GM12878 (cell line): ENCODE measurements at regions of chr5 and their contacts with region 1.

Region 1: GRCh38 chr5:36241631-36242533 is at the start of gene NADK2:
- DNase-seq: peak; percentile 61
- ATAC-seq: peak; percentile 92
- H3K4me3 ChIP-seq: peak within 1 kb of the TSS; percentile 97
- H3K27ac ChIP-seq: peak within 1 kb of the TSS; percentile 59
- H3K4me1 ChIP-seq: peaks cover 19% of the 10 kb centered on the region
- H3K27me3 ChIP-seq: no peaks in the 10 kb centered on the region
- CTCF ChIP-seq: peak; percentile 69 to 74 (median 73)
- EP300 ChIP-seq: no peak
- POLR2A ChIP-seq: peak; percentile 71
- RAD21 ChIP-seq: peak; percentile 40; the same call in 1 of the 2 replicates
- polyA plus RNA-seq, gene NADK2: 2.4 to 3.1 TPM

Region 2: DNA sequence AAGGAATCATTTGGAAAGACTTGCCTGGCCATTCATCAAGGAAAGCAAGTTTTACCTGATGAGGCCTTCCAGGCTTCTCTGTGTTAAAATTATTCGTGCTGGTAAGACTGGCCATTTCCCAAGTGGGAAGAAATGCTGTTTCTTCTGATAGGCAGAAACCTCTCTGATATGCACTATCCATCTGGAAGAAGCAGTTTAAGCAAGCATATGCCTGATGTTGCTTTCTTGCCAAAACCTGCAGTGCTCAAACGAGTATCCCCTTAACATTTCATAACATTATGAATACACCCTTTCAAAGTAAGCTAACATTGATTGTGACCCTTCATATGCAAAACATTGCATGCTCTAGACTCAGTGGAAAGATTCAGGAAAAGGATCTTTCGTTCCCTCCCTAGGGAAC is 975.6 kb before region 1 on chr5:
- CTCF ChIA-PET with region 1: no interaction called
- POLR2A ChIA-PET with region 1: no interaction called
- RAD21 ChIA-PET with region 1: no interaction called
- SMC1A ChIA-PET with region 1: no interaction called
- in situ Hi-C with region 1: no loop called
- intact Hi-C with region 1: no loop called
- DNase-seq: no peak
- ATAC-seq: no peak
- H3K4me3 ChIP-seq: no peak overlapping the region
- H3K27ac ChIP-seq: no peak overlapping the region
- H3K4me1 ChIP-seq: no peaks in the 10 kb centered on the region
- H3K27me3 ChIP-seq: no peaks in the 10 kb centered on the region
- CTCF ChIP-seq: no peak
- EP300 ChIP-seq: no peak
- POLR2A ChIP-seq: no peak
- RAD21 ChIP-seq: no peak

Region 3: GRCh38 chr5:36151434-36152323 is 90.2 kb before region 1 on chr5 and contains the starts of genes LMBRD2 and SKP2:
- CTCF ChIA-PET with region 1: interaction called, 12 read pairs
- POLR2A ChIA-PET with region 1: interaction called, 3 read pairs
- RAD21 ChIA-PET with region 1: interaction called, 5 read pairs
- SMC1A ChIA-PET with region 1: interaction called, 4 read pairs
- in situ Hi-C with region 1: no loop called
- intact Hi-C with region 1: no loop called
- DNase-seq: peak; percentile 95
- ATAC-seq: peak; percentile 97
- H3K4me3 ChIP-seq: peak within 1 kb of the TSS; percentile 94
- H3K27ac ChIP-seq: peak within 1 kb of the TSS; percentile 82
- H3K4me1 ChIP-seq: no peaks in the 10 kb centered on the region
- H3K27me3 ChIP-seq: no peaks in the 10 kb centered on the region
- CTCF ChIP-seq: no peak
- EP300 ChIP-seq: no peak
- POLR2A ChIP-seq: peak; percentile 82
- RAD21 ChIP-seq: no peak
- polyA plus RNA-seq, gene LMBRD2: 0.90 to 1.8 TPM
- polyA plus RNA-seq, gene SKP2: 13.9 to 17.9 TPM

Region 4: DNA sequence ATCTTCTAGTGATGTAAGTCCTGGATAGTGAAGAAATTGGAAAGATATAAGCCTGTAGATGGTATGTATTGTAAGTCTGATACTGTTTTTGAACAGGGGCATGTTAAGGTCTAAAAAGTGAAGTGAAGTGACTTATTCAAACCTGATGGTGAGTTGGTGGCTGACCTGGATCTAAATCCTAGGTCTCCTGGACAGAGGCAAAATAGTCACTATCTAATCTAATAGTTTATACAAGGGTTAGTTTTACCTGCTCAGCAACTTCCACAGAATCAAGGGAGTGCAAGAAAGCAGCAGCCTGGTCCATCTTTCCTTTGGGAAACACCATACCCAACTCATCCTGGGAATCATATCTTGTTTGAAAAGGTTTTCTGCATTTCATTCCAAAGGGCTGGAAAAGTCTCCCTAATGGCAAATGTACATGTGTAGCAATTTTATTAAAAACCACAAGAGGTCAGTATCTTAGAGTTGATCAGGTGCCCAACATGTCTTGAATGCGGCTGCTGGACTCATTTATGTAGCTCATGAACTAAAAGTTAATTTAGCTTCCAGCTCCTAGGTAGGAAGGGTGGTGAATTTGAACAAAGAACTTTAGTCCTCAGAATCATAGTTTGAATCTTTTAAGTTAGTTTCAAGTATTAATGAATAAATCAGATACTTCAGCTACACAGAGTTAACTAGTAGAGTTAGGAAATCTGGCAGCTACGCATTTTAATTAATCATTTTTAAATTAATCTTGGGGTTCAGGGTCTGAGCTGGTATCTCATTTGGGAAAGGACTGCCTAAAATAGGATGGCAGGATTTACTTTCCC is 64.0 kb before region 1 on chr5:
- CTCF ChIA-PET with region 1: interaction called, 20 read pairs
- POLR2A ChIA-PET with region 1: no interaction called
- RAD21 ChIA-PET with region 1: interaction called, 21 read pairs
- SMC1A ChIA-PET with region 1: interaction called, 11 read pairs
- in situ Hi-C with region 1: no loop called
- intact Hi-C with region 1: loop called (anchors 5 kb)
- DNase-seq: no peak
- ATAC-seq: peak; percentile 79
- H3K4me3 ChIP-seq: peak overlapping the region; percentile 1; the same call in 1 of the 2 replicates
- H3K27ac ChIP-seq: peak overlapping the region; percentile 50; the same call in 1 of the 2 replicates
- H3K4me1 ChIP-seq: peaks cover 14% of the 10 kb centered on the region
- H3K27me3 ChIP-seq: no peaks in the 10 kb centered on the region
- CTCF ChIP-seq: peak; percentile 13 to 37 (median 37); a peak in 4 of 6 replicates
- EP300 ChIP-seq: no peak
- POLR2A ChIP-seq: no peak
- RAD21 ChIP-seq: peak; percentile 54

Region 5: GRCh38 chr5:36214434-36214833 is 27.4 kb before region 1 on chr5:
- CTCF ChIA-PET with region 1: interaction called, 10 read pairs
- POLR2A ChIA-PET with region 1: interaction called, 3 read pairs
- RAD21 ChIA-PET with region 1: interaction called, 4 read pairs
- SMC1A ChIA-PET with region 1: interaction called, 4 read pairs
- in situ Hi-C with region 1: no loop called
- intact Hi-C with region 1: no loop called
- DNase-seq: no peak
- ATAC-seq: no peak
- H3K4me3 ChIP-seq: no peak overlapping the region
- H3K27ac ChIP-seq: no peak overlapping the region
- H3K4me1 ChIP-seq: no peaks in the 10 kb centered on the region
- H3K27me3 ChIP-seq: no peaks in the 10 kb centered on the region
- CTCF ChIP-seq: peak in 2 of 3 experiments; percentile 14 to 24; a peak in 2 of 6 replicates
- EP300 ChIP-seq: no peak
- POLR2A ChIP-seq: no peak
- RAD21 ChIP-seq: peak; percentile 42

Region 6: GRCh38 chr5:36252722-36253365 is 11.0 kb after region 1 on chr5:
- CTCF ChIA-PET with region 1: interaction called, 13 read pairs
- POLR2A ChIA-PET with region 1: no interaction called
- RAD21 ChIA-PET with region 1: no interaction called
- SMC1A ChIA-PET with region 1: interaction called, 8 read pairs
- in situ Hi-C with region 1: no loop called
- intact Hi-C with region 1: no loop called
- DNase-seq: no peak
- ATAC-seq: no peak
- H3K4me3 ChIP-seq: no peak overlapping the region
- H3K27ac ChIP-seq: no peak overlapping the region
- H3K4me1 ChIP-seq: no peaks in the 10 kb centered on the region
- H3K27me3 ChIP-seq: no peaks in the 10 kb centered on the region
- CTCF ChIP-seq: no peak
- EP300 ChIP-seq: no peak
- POLR2A ChIP-seq: no peak
- RAD21 ChIP-seq: no peak